CD8-positive, alpha-beta T cell (primary cell): ENCODE measurements at regions of chr5 and their contacts with region 1.

Region 1: GRCh38 chr5:9766581-9766980 is 136.4 kb upstream of the TAS2R1 start:
- DNase-seq: no peak
- ATAC-seq: no peak
- H3K4me3 ChIP-seq: no peak overlapping the region
- H3K4me3 Mint-ChIP-seq: no peak overlapping the region
- H3K27ac ChIP-seq: no peak overlapping the region
- H3K27ac Mint-ChIP-seq: no peak overlapping the region
- H3K4me1 ChIP-seq: no peaks in the 10 kb centered on the region
- H3K4me1 Mint-ChIP-seq: no peaks in the 10 kb centered on the region
- H3K27me3 ChIP-seq: no peaks in the 10 kb centered on the region
- H3K27me3 Mint-ChIP-seq: no peaks in the 10 kb centered on the region
- CTCF ChIP-seq: no peak

Region 2: DNA sequence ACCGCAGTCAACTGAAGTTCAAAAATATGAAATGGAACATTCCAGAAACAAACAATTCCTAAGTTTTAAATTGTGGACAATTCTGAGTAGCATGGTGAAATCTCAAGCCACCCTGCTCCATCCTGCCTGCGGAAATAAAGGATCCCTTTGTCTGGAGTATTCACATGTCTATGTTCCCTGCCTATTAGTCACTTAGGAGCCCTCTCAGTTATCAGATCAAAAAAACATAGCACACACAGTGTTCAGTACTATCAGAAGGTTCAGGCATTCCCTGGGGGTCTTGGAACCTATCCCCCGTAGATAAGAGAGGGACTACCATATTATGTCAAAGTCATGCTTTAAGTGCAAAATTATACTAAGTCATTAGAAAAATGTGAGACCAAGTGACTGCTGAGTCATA is 521.5 kb before region 1 on chr5:
- CTCF ChIA-PET with region 1: no interaction called
- POLR2A ChIA-PET with region 1: no interaction called
- intact Hi-C with region 1: loop called in 1 of 2 experiments (anchors 5 kb)
- DNase-seq: no peak
- ATAC-seq: no peak
- H3K4me3 ChIP-seq: no peak overlapping the region
- H3K4me3 Mint-ChIP-seq: no peak overlapping the region
- H3K27ac ChIP-seq: no peak overlapping the region
- H3K27ac Mint-ChIP-seq: no peak overlapping the region
- H3K4me1 ChIP-seq: no peaks in the 10 kb centered on the region
- H3K4me1 Mint-ChIP-seq: no peaks in the 10 kb centered on the region
- H3K27me3 ChIP-seq: no peaks in the 10 kb centered on the region
- H3K27me3 Mint-ChIP-seq: no peaks in the 10 kb centered on the region
- CTCF ChIP-seq: no peak

Region 3: DNA sequence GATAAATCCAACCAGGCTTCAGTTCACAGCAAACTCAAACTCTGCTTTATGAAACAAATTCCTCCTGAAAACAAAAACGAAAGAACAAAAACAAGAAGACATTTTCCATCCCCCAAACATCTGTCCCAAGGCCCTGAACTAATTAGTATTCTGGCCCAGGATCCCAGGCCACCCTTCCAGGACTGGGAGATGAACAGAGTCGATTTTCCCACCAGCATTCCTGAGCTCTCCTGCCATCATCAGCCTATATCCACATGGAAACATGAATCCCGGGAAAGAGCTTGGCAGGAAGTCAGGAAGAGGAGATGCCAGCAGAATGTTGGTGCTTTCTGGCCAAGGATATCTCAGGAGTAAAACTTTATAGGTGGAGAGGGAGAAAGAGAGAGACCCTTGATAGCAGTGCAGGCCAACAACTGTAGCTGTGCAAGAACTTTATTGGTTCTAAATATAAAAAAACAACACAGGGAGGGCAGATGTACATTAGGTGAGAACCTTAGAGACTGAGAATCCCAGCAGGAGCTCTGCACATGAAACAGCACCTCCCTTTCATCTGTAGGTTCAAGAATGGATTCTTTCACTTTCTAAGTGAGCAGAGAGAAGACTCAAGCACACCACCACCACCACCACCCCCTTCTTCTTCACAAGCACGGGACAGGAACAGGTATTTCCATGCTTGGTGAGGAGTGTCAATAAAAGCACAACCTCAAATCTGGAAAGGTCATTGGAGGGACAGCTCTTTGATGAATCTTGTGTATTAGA is 54.3 kb after region 1 on chr5:
- CTCF ChIA-PET with region 1: no interaction called
- POLR2A ChIA-PET with region 1: no interaction called
- intact Hi-C with region 1: no loop called
- DNase-seq: no peak
- ATAC-seq: no peak
- H3K4me3 ChIP-seq: no peak overlapping the region
- H3K4me3 Mint-ChIP-seq: no peak overlapping the region
- H3K27ac ChIP-seq: no peak overlapping the region
- H3K27ac Mint-ChIP-seq: no peak overlapping the region
- H3K4me1 ChIP-seq: no peaks in the 10 kb centered on the region
- H3K4me1 Mint-ChIP-seq: no peaks in the 10 kb centered on the region
- H3K27me3 ChIP-seq: no peaks in the 10 kb centered on the region
- H3K27me3 Mint-ChIP-seq: no peaks in the 10 kb centered on the region
- CTCF ChIP-seq: no peak